ENCODE measurements at regions of chr16 and their contacts with region 1.

Region 1: GRCh38 chr16:69555437-69555836 is 10.3 kb upstream of the NFAT5 start:
- DNase-seq: no peak
- H3K4me3 ChIP-seq: no peak overlapping the region
- CTCF ChIP-seq: no peak

Region 2: DNA sequence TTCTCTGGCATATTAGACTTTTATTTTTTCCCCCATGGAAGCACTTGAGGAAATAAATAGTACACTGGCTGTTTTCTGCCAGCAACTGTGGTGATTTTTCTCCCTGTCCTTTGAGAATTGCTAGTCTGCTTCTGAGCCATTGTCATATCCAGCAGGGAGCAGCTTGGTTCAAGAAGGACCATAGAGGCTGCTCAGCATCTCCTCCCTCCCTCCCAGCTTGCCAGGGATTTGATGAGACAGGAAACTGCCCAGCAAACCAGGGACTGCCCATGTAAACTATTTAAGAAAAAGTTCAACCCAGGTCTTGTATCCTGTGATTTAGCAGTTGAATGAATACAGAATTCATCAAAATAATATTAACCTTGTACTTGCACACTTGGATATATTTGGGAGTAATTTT is 91.6 kb before region 1 on chr16:
- in situ Hi-C with region 1: loop called (anchors 5 kb)
- DNase-seq: no peak
- H3K4me3 ChIP-seq: no peak overlapping the region
- CTCF ChIP-seq: no peak

Region 3: GRCh38 chr16:69501956-69502745 is 53.3 kb before region 1 on chr16:
- in situ Hi-C with region 1: no loop called
- DNase-seq: no peak
- H3K4me3 ChIP-seq: no peak overlapping the region
- CTCF ChIP-seq: no peak